Naive thymus-derived CD4-positive, alpha-beta T cell (primary cell): ENCODE measurements at regions of chr1 and their contacts with region 1.

Region 1: GRCh38 chr1:198620951-198621824 is 17.7 kb upstream of the PTPRC start:
- DNase-seq: peak; percentile 25 to 82 (median 76)
- ATAC-seq: peak; percentile 87
- H3K4me3 ChIP-seq: peak overlapping the region; percentile 48
- H3K4me3 Mint-ChIP-seq: peak overlapping the region; percentile 65 to 91 (median 84)
- H3K27ac ChIP-seq: peak overlapping the region; percentile 67
- H3K27ac Mint-ChIP-seq: peak overlapping the region; percentile 89 to 99 (median 96)
- H3K4me1 ChIP-seq: peaks cover 73 to 93% of the 10 kb centered on the region in 2 donors
- H3K4me1 Mint-ChIP-seq: peaks cover 58 to 98% (median 85%) of the 10 kb centered on the region in 7 donors
- H3K27me3 ChIP-seq: no peaks in the 10 kb centered on the region
- H3K27me3 Mint-ChIP-seq: no peaks in the 10 kb centered on the region

Region 2: DNA sequence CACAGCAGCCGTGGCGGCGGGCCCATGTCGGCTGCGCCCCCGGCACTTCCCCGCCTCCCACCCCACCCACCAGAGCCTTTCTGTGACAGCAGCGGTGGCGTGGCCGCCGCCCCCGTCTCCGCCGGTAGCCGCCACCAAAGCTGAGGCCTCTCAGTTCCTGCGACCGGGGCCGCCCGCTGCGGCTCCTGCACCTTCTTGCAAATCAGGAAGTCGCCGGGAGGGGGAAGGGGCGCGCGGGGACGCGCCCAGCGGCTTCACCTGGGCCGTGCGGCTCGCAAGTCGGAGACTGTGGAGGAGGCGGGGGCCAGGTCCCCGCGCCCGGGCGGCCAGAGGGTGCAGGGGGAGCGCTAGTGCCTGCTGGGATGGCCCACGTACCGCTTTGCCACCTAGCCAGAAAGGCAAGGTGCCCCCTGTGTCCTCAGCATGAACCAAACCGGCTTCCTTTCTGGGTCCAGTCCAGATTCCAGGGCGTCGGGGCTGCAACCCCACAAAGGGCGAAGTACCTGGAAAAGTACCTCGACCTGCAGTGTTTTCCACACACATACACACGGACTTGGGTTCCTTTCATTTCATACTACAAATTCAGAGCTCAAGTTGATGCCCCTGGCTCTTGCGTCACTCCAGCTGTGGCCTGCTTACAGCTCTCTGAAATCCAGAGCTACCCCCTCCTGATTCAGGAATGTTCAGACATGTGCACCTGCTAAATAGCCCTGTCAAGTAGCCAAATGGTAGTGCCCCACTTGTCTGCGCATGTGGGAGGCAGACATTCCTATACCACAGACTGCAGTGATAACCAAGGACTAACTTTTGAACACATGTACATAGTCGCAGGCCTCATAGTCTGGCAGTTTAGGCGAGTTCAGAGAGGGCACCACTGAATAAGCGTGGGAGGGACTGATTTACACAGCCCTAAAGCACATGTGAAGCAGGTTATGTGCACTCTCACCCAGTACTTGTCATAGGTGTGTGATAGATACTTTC is 845.6 kb before region 1 on chr1 and contains the start of gene DENND1B:
- CTCF ChIA-PET with region 1: no interaction called
- POLR2A ChIA-PET with region 1: no interaction called
- intact Hi-C with region 1: loop called in 1 of 2 experiments (anchors 5 kb)
- DNase-seq: peak; percentile 64 to 83 (median 81)
- ATAC-seq: peak; percentile 80
- H3K4me3 ChIP-seq: peak within 1 kb of the TSS; percentile 68
- H3K4me3 Mint-ChIP-seq: peak within 1 kb of the TSS; percentile 87 to 98 (median 92)
- H3K27ac ChIP-seq: peak within 1 kb of the TSS; percentile 74
- H3K27ac Mint-ChIP-seq: peak within 1 kb of the TSS; percentile 90 to 98 (median 97)
- H3K4me1 ChIP-seq: peaks cover 19 to 34% of the 10 kb centered on the region in 2 donors
- H3K4me1 Mint-ChIP-seq: peaks cover 32 to 72% (median 62%) of the 10 kb centered on the region in 7 donors
- H3K27me3 ChIP-seq: no peaks in the 10 kb centered on the region
- H3K27me3 Mint-ChIP-seq: no peaks in the 10 kb centered on the region
- total RNA-seq, gene DENND1B: 14.2 to 28.7 (median 23.2) TPM

Region 3: GRCh38 chr1:198529414-198529813 is 91.8 kb before region 1 on chr1:
- CTCF ChIA-PET with region 1: interaction called, 12 read pairs
- POLR2A ChIA-PET with region 1: interaction called, 126 read pairs
- intact Hi-C with region 1: no loop called
- DNase-seq: no peak
- ATAC-seq: no peak
- H3K4me3 ChIP-seq: no peak overlapping the region
- H3K4me3 Mint-ChIP-seq: peak overlapping the region in 4 of 10 donors; percentile 11 to 52 (median 48)
- H3K27ac ChIP-seq: no peak overlapping the region
- H3K27ac Mint-ChIP-seq: peak overlapping the region in 2 of 9 donors; percentile 34 to 56
- H3K4me1 ChIP-seq: peaks cover 7 to 50% of the 10 kb centered on the region in 2 donors
- H3K4me1 Mint-ChIP-seq: peaks cover 33 to 92% (median 79%) of the 10 kb centered on the region in 7 donors
- H3K27me3 ChIP-seq: no peaks in the 10 kb centered on the region
- H3K27me3 Mint-ChIP-seq: no peaks in the 10 kb centered on the region

Region 4: GRCh38 chr1:198598796-198599321 is 22.3 kb before region 1 on chr1:
- CTCF ChIA-PET with region 1: interaction called, 7 read pairs
- POLR2A ChIA-PET with region 1: interaction called, 46 read pairs
- intact Hi-C with region 1: no loop called
- DNase-seq: peak in 1 of 9 donors; percentile 22
- ATAC-seq: peak; percentile 57
- H3K4me3 ChIP-seq: peak overlapping the region; percentile 11
- H3K4me3 Mint-ChIP-seq: peak overlapping the region in 9 of 10 donors; percentile 18 to 84 (median 61)
- H3K27ac ChIP-seq: peak overlapping the region; percentile 55
- H3K27ac Mint-ChIP-seq: peak overlapping the region; percentile 58 to 96 (median 93)
- H3K4me1 ChIP-seq: peaks cover 34 to 65% of the 10 kb centered on the region in 2 donors
- H3K4me1 Mint-ChIP-seq: peaks cover 49 to 95% (median 91%) of the 10 kb centered on the region in 7 donors
- H3K27me3 ChIP-seq: no peaks in the 10 kb centered on the region
- H3K27me3 Mint-ChIP-seq: no peaks in the 10 kb centered on the region

Region 5: GRCh38 chr1:198638894-198639635 is 17.9 kb after region 1 on chr1 and contains the start of gene PTPRC:
- CTCF ChIA-PET with region 1: interaction called, 88 read pairs
- POLR2A ChIA-PET with region 1: interaction called, 332 read pairs
- intact Hi-C with region 1: loop called (anchors 1 kb)
- DNase-seq: peak in 7 of 9 donors; percentile 46 to 78 (median 68)
- ATAC-seq: peak; percentile 81
- H3K4me3 ChIP-seq: peak within 1 kb of the TSS; percentile 81
- H3K4me3 Mint-ChIP-seq: peak within 1 kb of the TSS; percentile 77 to 100 (median 92)
- H3K27ac ChIP-seq: peak within 1 kb of the TSS; percentile 94
- H3K27ac Mint-ChIP-seq: peak within 1 kb of the TSS; percentile 86 to 98 (median 96)
- H3K4me1 ChIP-seq: peaks cover 31 to 40% of the 10 kb centered on the region in 2 donors
- H3K4me1 Mint-ChIP-seq: peaks cover 39 to 60% (median 52%) of the 10 kb centered on the region in 7 donors
- H3K27me3 ChIP-seq: no peaks in the 10 kb centered on the region
- H3K27me3 Mint-ChIP-seq: no peaks in the 10 kb centered on the region
- total RNA-seq, gene PTPRC: 739 to 1,121 (median 1,015) TPM

Region 6: GRCh38 chr1:198669023-198669698 is 48.0 kb after region 1 on chr1:
- CTCF ChIA-PET with region 1: interaction called, 9 read pairs
- POLR2A ChIA-PET with region 1: interaction called, 28 read pairs
- intact Hi-C with region 1: no loop called
- DNase-seq: peak in 2 of 9 donors; percentile 46 to 53
- ATAC-seq: peak; percentile 81
- H3K4me3 ChIP-seq: peak overlapping the region; percentile 2
- H3K4me3 Mint-ChIP-seq: peak overlapping the region; percentile 48 to 78 (median 71)
- H3K27ac ChIP-seq: peak overlapping the region; percentile 75
- H3K27ac Mint-ChIP-seq: peak overlapping the region; percentile 74 to 98 (median 91)
- H3K4me1 ChIP-seq: peaks cover 79 to 86% of the 10 kb centered on the region in 2 donors
- H3K4me1 Mint-ChIP-seq: peaks cover 61 to 100% (median 95%) of the 10 kb centered on the region in 7 donors
- H3K27me3 ChIP-seq: no peaks in the 10 kb centered on the region
- H3K27me3 Mint-ChIP-seq: no peaks in the 10 kb centered on the region